A673 (cell line): ENCODE measurements at regions of chr2 and their contacts with region 1.

Region 1: DNA sequence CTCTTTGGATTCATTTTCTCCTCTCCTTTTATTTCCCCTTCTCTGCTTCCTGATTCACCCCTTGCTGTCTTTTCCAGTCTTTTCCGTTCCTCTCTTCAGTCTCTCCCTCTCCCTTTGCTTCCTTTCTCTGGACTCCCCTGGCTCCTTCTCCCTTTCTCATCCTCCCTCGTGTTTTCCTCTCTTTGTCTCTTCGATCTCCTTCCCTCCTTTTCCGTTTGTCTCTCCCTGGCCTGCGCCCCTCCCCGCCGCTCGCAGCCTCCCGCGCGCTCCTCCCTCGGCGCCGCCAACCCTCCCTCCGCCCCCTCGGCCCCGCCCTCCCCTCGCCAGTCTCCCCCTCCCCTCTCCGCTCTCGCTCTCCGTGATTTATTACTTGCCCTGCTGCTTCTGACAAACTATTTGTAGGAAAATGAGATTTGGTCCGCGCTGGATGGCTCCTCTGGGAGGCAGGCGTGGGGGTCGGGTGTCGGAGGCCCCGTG is 46.0 kb upstream of the PAX8 start:
- DNase-seq: peak; percentile 91
- H3K4me3 ChIP-seq: peak overlapping the region; percentile 51
- H3K27ac ChIP-seq: peak overlapping the region; percentile 70
- H3K4me1 ChIP-seq: peaks cover 11% of the 10 kb centered on the region
- H3K27me3 ChIP-seq: no peaks in the 10 kb centered on the region
- CTCF ChIP-seq: no peak

Region 2: GRCh38 chr2:112577756-112578155 is 747.0 kb before region 1 on chr2:
- CTCF ChIA-PET with region 1: no interaction called
- POLR2A ChIA-PET with region 1: no interaction called
- intact Hi-C with region 1: no loop called
- DNase-seq: peak; percentile 26
- H3K4me3 ChIP-seq: no peak overlapping the region
- H3K27ac ChIP-seq: no peak overlapping the region
- H3K4me1 ChIP-seq: peaks cover 16% of the 10 kb centered on the region
- H3K27me3 ChIP-seq: no peaks in the 10 kb centered on the region
- CTCF ChIP-seq: peak; percentile 38

Region 3: DNA sequence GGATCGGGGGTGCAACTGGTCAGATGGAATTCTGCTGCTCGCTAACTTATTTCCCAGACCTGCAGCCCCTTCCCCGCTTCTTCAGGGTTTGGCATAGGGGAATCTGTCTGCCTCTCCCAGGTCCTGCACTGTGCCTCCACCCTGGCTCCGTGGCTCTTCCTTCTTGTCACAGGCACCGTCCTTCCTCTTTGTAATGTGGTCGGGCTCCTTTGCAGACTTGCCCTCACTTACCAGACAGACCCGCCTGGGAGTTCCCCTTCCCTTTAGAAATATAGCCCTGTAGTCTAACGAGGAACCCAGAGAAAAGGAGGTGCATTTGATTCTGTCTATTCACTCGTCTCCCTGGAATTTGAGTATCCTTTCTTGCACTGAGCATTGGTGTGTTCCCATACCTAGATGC is 17.9 kb after region 1 on chr2:
- CTCF ChIA-PET with region 1: no interaction called
- POLR2A ChIA-PET with region 1: interaction called, 23 read pairs
- intact Hi-C with region 1: no loop called
- DNase-seq: no peak
- H3K4me3 ChIP-seq: no peak overlapping the region
- H3K27ac ChIP-seq: no peak overlapping the region
- H3K4me1 ChIP-seq: no peaks in the 10 kb centered on the region
- H3K27me3 ChIP-seq: peaks cover 4% of the 10 kb centered on the region
- CTCF ChIP-seq: no peak

Region 4: GRCh38 chr2:113686537-113686936 is 361.8 kb after region 1 on chr2:
- CTCF ChIA-PET with region 1: no interaction called
- POLR2A ChIA-PET with region 1: interaction called, 15 read pairs
- intact Hi-C with region 1: no loop called
- DNase-seq: no peak
- H3K4me3 ChIP-seq: no peak overlapping the region
- H3K27ac ChIP-seq: no peak overlapping the region
- H3K4me1 ChIP-seq: no peaks in the 10 kb centered on the region
- H3K27me3 ChIP-seq: no peaks in the 10 kb centered on the region
- CTCF ChIP-seq: no peak